Mammary epithelial cell (primary cell): ENCODE measurements at regions of chr16 and their contacts with region 1.

Region 1: DNA sequence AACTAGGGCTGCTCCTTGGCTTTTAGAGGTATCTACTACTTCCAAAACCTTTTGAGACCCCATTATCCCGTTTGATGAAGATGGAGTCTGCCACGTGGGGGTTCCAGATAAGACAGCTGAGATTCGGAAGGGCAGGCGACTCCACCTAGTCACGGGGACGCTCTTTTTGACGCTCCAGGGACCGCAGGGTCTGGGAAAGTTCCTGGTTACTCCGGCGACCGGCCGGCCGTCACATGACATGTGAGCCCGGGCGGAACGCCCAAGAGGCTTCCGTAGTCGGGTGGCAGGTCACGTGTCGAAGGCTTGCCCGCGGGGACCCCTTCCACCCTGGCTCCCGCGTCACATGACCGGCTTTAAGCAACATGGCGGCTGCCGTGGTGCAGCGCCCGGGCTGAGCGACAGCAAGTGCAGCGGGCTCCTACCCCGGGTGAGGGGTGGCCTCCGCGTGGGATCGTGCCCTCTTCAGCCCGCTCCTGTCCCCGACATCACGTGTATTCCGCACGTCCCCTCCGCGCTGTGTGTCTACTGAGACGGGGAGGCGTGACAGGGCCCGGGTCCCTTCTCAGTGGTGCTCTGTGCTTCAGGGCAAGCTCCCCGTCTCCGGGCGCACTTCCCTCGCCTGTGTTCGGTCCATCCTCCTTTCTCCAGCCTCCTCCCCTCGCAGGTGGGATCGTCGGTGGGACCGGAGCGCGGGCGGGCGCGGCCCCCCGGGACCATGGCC is at the start of gene SPNS1:
- DNase-seq: peak; percentile 91
- H3K4me3 ChIP-seq: peak within 1 kb of the TSS; percentile 66 to 90 (median 72)
- H3K27ac ChIP-seq: peak within 1 kb of the TSS; percentile 79
- H3K4me1 ChIP-seq: peaks cover 23% of the 10 kb centered on the region
- H3K27me3 ChIP-seq: no peaks in the 10 kb centered on the region
- CTCF ChIP-seq: no peak
- total RNA-seq, gene SPNS1: 24.5 to 32.3 TPM

Region 2: DNA sequence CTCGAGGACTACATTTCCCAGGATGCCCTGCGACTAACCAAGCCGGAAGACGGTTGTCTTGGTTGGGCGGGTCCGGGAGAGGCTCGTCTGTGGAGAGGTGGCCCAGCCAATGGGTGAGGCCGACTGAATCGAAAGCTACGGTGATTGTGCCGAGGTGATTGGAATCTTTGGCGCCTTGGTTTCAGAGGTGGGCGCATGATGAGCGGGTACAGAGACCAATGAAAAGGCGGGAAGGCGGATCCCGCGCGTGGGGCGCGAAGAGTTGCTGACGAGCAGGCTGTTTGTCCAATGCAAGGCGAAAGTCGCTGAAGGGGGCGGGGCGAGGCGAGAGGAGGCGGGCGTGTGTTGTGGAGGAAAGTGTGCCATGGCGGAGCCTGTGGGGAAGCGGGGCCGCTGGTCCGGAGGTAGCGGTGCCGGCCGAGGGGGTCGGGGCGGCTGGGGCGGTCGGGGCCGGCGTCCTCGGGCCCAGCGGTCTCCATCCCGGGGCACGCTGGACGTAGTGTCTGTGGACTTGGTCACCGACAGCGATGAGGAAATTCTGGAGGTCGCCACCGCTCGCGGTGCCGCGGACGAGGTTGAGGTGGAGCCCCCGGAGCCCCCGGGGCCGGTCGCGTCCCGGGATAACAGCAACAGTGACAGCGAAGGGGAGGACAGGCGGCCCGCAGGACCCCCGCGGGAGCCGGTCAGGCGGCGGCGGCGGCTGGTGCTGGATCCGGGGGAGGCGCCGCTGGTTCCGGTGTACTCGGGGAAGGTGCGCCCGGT is 23.8 kb before region 1 on chr16 and contains the start of gene NFATC2IP:
- CTCF ChIA-PET with region 1: no interaction called
- dilution Hi-C with region 1: no loop called
- in situ Hi-C with region 1: no loop called
- intact Hi-C with region 1: loop called (anchors 2 kb)
- DNase-seq: peak; percentile 100
- H3K4me3 ChIP-seq: peak within 1 kb of the TSS; percentile 76 to 95 (median 89)
- H3K27ac ChIP-seq: peak within 1 kb of the TSS; percentile 55
- H3K4me1 ChIP-seq: peaks cover 16% of the 10 kb centered on the region
- H3K27me3 ChIP-seq: no peaks in the 10 kb centered on the region
- CTCF ChIP-seq: no peak
- total RNA-seq, gene NFATC2IP: 21.5 to 59.2 TPM

Region 3: GRCh38 chr16:29694384-29695195 is 720.0 kb after region 1 on chr16:
- CTCF ChIA-PET with region 1: no interaction called
- dilution Hi-C with region 1: no loop called
- in situ Hi-C with region 1: no loop called
- intact Hi-C with region 1: no loop called
- DNase-seq: no peak
- H3K4me3 ChIP-seq: no peak overlapping the region
- H3K27ac ChIP-seq: no peak overlapping the region
- H3K4me1 ChIP-seq: no peaks in the 10 kb centered on the region
- H3K27me3 ChIP-seq: no peaks in the 10 kb centered on the region
- CTCF ChIP-seq: no peak